Dorsolateral prefrontal cortex (tissue), 120 donors: ENCODE measurements at regions of chr18 and their contacts with region 1.

Region 1: DNA sequence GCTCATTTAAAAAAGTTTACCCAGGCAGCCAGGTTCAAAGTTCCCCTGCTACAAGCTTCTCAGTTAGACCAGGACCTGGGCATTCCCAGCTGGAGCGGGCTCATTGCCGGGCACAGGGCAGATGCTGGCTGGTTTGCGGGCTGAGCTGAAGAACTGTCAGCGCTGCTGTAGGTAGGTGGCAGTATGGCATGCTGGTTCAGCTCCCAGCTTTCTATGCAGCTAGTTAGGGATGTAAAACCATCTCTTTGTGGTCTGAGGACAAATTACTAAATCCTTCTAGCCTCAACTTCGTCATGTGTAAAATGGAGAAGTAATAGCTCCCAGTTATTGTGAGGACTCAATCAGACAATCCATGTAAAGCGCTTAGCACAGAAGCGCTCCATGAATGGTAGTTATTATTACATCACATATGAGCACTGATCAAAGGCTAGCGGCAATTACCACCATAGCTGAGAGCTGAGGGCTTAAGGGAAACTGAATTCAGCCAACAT is 2.4 kb upstream of the LDLRAD4 start:
- DNase-seq: peak; percentile 70 to 91 (median 88)
- H3K4me3 ChIP-seq: peak overlapping the region in 53 of 59 donors; percentile 17 to 95 (median 82)
- H3K27ac ChIP-seq: peak overlapping the region in 43 of 59 donors; percentile 23 to 85 (median 62)
- H3K27me3 ChIP-seq: no peaks in the 10 kb centered on the region
- CTCF ChIP-seq: peak; percentile 58 to 96 (median 87)

Region 2: DNA sequence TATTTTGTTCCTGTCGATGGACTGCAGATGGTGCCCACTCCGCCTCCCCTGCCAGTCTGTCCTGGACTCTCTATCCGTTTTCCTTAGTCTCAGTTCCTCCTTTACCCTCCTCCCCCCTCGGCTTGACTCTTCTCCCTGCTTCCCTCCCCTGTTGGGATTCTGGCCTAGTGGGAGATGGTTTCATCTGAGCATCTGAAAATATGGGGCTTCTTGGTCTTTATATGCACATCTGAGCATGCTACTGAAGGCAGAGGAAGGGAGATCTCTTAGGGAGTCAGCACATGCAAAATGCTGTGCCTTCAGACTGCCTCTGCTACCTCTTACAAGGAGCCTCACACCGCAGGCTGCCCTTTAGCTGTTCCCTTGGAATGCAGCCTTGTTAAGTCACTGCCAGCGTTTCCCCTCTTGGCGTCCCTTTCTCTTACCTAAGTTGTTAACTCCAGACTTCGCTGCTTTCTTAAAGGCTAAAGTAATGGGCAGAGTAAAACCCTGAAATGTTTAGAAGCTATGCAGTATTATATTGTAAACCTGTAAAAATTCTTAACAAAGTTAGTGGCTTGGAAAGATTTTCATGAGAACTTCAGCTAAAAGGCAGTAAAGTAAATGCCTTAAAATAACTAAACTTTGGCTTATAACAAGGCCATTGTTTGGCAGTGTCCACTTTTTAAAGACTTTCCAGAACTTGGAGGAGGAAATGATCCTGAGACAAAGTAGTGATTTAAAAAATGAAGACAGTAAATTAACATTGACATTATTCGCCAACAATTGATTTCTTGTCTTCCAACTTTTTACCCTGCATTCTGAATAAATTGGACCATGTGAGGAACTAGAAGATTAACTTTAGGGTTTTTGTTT is 52.2 kb after region 1 on chr18:
- intact Hi-C with region 1: loop called (anchors 5 to 10 kb)
- DNase-seq: no peak
- H3K4me3 ChIP-seq: no peak overlapping the region
- H3K27ac ChIP-seq: peak overlapping the region in 6 of 59 donors; percentile 0 to 45 (median 19)
- H3K27me3 ChIP-seq: no peaks in the 10 kb centered on the region
- CTCF ChIP-seq: no peak

Region 3: DNA sequence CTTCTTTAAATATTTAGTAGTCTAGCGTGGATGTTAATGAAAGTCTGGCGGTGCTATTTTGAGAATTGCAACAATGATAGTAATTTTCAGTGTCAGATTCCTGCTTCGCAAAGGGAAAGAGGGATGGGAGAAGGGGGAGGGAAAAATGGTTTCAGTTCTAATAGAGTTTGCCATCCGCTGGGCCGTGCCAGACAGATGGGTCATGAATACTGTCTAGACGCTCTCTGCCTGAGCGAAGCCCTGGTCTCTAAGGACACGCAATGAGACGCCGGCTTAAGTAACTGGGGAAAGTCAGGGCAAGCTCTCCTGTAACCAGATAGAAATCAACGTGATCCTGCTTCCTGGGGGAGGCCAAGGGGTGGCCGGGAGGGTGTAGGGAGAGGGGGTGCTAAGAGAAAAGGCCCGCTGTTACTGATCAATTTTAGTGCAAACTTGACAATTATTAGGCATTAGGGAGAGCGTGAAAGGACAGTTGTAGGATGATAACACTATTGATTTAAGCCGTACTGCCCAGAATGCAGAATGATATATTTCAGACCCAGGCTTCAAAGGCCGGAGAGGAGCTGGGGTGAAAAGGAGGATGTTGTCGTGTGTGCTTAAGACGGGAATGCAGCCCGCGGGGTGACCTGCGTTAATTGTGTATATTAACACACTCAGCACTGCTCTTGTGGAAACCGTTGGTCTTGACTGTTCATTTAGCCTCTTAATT is 231.6 kb after region 1 on chr18:
- intact Hi-C with region 1: loop called (anchors 5 kb)
- DNase-seq: no peak
- H3K4me3 ChIP-seq: peak overlapping the region in 58 of 59 donors; percentile 2 to 64 (median 39)
- H3K27ac ChIP-seq: peak overlapping the region in 17 of 59 donors; percentile 1 to 66 (median 39)
- H3K27me3 ChIP-seq: no peaks in the 10 kb centered on the region
- CTCF ChIP-seq: no peak

Region 4: GRCh38 chr18:13629841-13630715 is 413.9 kb after region 1 on chr18:
- intact Hi-C with region 1: loop called (anchors 2 to 5 kb)
- DNase-seq: peak in 6 of 10 donors; percentile 68 to 83 (median 74)
- H3K4me3 ChIP-seq: peak overlapping the region in 31 of 59 donors; percentile 5 to 36 (median 19)
- H3K27ac ChIP-seq: peak overlapping the region; percentile 49 to 99 (median 91)
- H3K27me3 ChIP-seq: no peaks in the 10 kb centered on the region
- CTCF ChIP-seq: peak; percentile 63 to 97 (median 92)

Region 5: DNA sequence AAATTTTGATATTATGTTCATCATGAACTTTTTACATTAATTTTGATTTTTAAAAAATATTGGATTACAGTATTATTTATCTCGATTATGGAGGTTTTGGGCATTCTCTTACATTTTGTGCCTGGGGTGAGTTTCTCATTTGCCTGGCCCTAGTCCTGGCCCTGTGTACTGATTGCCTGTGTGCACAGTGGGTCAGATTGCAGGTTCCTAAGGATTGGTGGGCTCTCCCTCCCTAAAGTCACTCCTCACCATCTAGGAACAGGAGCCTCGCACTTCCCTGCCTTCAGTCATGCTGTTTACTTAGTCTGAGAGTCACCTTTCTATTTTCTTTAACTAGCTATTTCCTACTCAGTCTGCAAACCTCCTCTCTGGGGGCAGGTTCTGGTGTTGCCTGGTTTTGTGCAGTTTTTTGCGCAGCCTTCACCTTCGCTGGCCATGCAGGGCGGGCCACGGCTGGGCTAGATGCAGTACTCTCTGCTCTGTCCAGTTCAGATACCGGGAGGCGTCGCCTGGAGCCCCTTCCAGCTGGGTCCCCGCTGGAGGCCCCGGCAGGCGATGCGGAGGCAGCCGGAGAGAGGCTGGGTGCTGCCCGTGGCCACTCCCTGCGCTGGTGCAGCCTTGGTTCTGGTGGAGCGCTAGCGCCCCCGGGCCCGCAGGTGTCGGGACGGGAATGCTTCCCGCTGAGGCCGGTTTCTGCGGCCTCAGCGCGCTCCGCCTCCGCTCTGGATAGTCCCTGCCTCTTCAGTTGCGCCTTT is 584.5 kb after region 1 on chr18:
- intact Hi-C with region 1: loop called in 1 of 2 experiments (anchors 5 kb)
- DNase-seq: peak; percentile 53 to 83 (median 62)
- H3K4me3 ChIP-seq: peak overlapping the region; percentile 21 to 67 (median 48)
- H3K27ac ChIP-seq: no peak overlapping the region
- H3K27me3 ChIP-seq: peaks cover 0 to 15% (median 0%) of the 10 kb centered on the region in 45 donors
- CTCF ChIP-seq: peak in 54 of 56 donors; percentile 26 to 76 (median 54)